Mammary epithelial cell (primary cell): ENCODE measurements at regions of chr7 and their contacts with region 1.

Region 1: DNA sequence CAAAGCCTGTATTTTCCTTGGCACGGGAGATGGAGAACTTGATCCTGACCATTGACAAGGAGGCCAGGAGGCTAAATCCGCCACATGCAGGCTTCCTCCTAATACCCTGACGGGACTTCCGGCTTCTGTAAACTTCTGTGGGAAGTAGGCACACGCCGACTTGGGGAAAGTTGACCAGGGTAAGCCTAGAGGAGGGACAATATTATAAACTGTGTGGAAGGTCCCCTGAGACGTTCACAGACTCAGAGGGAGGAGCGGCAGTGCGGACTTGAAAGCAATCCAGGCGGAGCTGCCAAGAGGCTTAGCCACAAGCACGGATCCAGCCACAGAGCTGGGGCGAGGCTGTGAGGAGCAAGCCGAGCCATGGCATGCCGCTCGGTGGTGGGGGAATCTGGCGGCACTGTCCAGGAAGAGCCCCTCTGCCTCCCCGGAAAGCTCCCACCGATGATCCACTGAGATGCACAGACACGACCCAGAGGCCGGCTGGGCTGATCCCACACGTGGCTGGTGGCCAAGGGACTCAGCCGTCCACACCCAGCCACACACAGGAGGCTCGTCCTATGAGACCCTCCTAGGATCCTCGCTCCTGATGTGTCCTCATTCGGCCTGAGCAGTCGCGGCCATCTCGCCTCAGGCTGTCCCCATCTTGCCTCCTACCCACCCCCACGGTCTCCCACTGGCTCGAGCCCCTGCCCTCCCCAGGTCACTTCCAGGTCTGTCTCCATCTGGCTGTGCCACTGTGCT is 40.0 kb upstream of the INSIG1 start:
- DNase-seq: peak; percentile 69
- H3K4me3 ChIP-seq: no peak overlapping the region
- H3K27ac ChIP-seq: peak overlapping the region; percentile 43
- H3K4me1 ChIP-seq: peaks cover 14% of the 10 kb centered on the region
- H3K27me3 ChIP-seq: no peaks in the 10 kb centered on the region
- CTCF ChIP-seq: no peak

Region 2: GRCh38 chr7:155084969-155085368 is 172.7 kb before region 1 on chr7:
- CTCF ChIA-PET with region 1: no interaction called
- dilution Hi-C with region 1: no loop called
- in situ Hi-C with region 1: no loop called
- intact Hi-C with region 1: no loop called
- DNase-seq: no peak
- H3K4me3 ChIP-seq: no peak overlapping the region
- H3K27ac ChIP-seq: no peak overlapping the region
- H3K4me1 ChIP-seq: no peaks in the 10 kb centered on the region
- H3K27me3 ChIP-seq: peaks cover 9% of the 10 kb centered on the region
- CTCF ChIP-seq: no peak

Region 3: GRCh38 chr7:155344600-155345433 is 87.2 kb after region 1 on chr7:
- CTCF ChIA-PET with region 1: no interaction called
- dilution Hi-C with region 1: no loop called
- in situ Hi-C with region 1: no loop called
- intact Hi-C with region 1: loop called (anchors 2 kb)
- DNase-seq: peak; percentile 41
- H3K4me3 ChIP-seq: peak overlapping the region in 2 of 3 experiments; percentile 36 to 54
- H3K27ac ChIP-seq: no peak overlapping the region
- H3K4me1 ChIP-seq: no peaks in the 10 kb centered on the region
- H3K27me3 ChIP-seq: no peaks in the 10 kb centered on the region
- CTCF ChIP-seq: peak; percentile 56 to 70

Region 4: DNA sequence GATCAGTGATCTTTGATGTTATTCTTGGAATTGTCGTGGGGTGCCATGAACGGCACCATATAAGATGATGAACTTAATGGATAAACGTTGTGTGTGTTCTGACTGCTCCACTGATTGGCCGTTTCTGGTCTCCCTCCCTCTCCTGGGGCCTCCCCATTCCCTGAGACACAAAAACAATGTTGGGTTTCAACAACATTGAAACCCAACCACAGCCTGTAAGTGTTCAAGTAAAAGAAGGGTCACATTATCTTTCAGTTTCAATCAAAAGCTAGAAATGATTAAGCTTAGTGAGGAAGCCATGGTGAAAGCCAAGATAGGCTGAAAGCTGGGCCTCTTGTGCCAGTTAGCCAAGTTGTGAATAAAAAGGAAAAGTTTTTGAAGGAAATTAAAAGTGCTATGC is 219.8 kb after region 1 on chr7:
- CTCF ChIA-PET with region 1: no interaction called
- dilution Hi-C with region 1: no loop called
- in situ Hi-C with region 1: no loop called
- intact Hi-C with region 1: no loop called
- DNase-seq: no peak
- H3K4me3 ChIP-seq: no peak overlapping the region
- H3K27ac ChIP-seq: no peak overlapping the region
- H3K4me1 ChIP-seq: peaks cover 4% of the 10 kb centered on the region
- H3K27me3 ChIP-seq: peaks cover 5% of the 10 kb centered on the region
- CTCF ChIP-seq: no peak